Cardiac septum (tissue), 1 donor: ENCODE measurements at regions of chr5 and their contacts with region 1.

Region 1: DNA sequence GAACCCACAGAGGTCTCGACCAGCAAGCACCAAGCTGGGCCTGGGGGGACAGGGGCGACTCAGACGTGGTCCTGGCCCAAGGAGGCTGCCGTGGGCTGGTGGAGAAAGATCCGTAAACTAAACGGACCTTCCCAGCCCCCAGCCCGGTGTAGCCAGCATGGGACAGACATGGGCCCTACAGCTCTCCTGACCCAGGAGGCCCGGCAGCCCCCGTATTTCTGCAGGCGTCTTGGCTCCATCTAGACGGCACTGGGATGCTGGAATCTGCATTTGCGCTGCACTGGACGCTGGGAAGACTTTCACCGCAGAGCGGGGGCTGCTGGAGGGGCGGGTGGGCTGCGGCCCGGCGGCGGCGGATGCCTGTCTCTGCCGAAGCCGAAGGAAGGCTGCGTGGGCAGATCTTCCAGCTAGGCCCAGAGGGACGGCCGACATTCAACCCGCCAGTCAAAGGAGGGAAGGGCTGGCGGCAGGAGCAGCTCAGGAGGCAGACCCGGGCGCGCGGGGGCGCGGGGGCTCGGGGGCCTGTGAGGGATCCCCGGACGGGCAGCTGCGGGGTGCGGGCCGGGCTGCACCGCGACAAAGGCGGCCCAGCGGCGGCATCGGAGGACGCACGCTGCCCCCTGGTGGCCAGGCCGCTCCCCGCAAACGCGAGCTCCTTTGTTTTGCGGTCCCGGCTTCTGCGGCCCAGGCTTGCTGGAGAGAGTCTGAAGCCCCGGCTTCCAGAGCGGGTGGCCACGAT is 266.2 kb downstream of the NSG2 start:
- DNase-seq: no peak

Region 2: GRCh38 chr5:173615884-173616576 is 695.7 kb before region 1 on chr5:
- intact Hi-C with region 1: loop called (anchors 5 kb)
- DNase-seq: peak; percentile 78

Region 3: DNA sequence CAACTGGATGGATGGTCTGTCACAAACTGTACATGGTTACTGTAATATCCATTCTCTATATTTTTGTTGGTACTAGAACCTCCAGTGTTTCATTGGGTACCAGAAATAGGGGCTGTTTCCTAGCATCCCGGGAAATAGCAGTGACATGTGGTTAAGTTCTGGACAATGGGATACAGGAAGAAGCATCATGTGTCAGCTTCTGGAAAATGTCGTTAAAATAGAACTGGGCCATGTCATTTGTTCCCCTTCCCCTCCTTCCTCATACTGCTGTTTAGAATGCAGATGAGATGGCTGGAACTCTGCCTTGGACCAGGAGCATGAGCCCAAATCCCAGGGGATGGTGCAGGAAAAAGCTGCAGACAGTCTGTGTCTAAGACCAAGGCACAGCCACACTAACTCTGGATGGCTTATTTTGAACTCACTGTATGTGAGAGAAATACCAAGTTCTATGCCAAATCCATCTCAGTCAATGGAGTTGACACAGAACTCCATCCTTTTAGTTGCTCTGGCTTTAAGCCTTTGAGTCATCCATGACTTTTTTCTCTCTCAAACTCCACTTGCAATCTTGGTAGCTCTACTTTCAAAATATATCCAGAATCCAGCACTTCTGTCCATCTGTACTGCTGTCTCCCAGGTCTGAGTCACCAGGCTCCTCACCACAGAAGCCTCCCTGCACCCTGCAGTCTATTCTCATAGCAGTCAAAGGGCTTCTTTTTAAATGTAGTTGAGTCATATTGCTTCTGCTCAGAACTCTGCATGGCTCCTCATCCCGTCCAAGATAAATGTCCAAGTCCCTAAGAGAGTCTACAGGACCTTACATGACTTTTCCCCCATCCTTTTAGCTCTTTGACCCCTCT is 82.0 kb before region 1 on chr5:
- intact Hi-C with region 1: loop called (anchors 5 kb)
- DNase-seq: no peak

Region 4: GRCh38 chr5:174418928-174419796 is 107.5 kb after region 1 on chr5:
- intact Hi-C with region 1: no loop called
- DNase-seq: peak; percentile 87